HCT116 (cell line): ENCODE measurements at regions of chr6 and their contacts with region 1.

Region 1: GRCh38 chr6:151669196-151669688 is 138.2 kb upstream of the ESR1 start:
- DNase-seq: no peak
- ATAC-seq: no peak
- H3K4me3 ChIP-seq: peak overlapping the region; percentile 19 to 53; a peak in 3 of 4 replicates
- H3K27ac ChIP-seq: peak overlapping the region; percentile 56
- H3K4me1 ChIP-seq: peaks cover 17 to 40% of the 10 kb centered on the region in 2 experiments
- H3K27me3 ChIP-seq: no peaks in the 10 kb centered on the region
- CTCF ChIP-seq: no peak
- POLR2A ChIP-seq: no peak
- RAD21 ChIP-seq: no peak

Region 2: DNA sequence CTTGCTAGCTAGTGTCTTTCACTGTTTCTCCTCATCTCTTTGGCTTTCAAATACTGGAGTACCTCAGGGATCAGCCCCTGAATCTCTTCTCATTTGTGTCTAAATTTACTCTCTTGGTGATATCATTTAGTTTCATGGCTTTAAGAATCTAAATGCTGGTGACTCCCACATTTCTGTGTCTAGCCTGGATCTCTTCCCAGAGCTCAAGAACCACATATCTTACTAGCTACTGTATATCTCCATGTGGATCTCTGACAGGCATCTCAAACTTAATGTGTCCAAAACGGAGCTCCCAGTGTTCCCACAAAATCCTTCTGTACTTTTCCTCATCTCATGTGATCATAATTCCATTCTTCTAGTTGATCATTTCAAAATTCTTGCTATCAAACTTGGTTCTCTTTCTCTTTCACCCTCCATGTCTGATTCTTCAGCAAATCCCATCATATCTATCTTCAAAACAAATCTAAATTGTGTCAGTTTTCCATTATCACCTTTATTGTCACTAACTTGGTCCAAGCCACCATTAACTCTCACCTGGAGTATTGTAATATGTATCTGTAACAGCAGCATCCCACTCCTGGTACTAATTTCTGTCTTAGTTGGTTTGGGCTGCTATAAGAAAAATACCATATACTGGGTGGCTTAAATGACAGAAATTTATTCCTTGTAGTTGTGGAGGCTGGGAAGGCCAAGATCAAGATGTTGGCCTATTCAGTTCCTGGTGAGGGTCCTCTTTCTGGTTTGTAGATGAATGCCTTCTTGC is 129.6 kb before region 1 on chr6:
- CTCF ChIA-PET with region 1: no interaction called
- POLR2A ChIA-PET with region 1: no interaction called
- RAD21 ChIA-PET with region 1: interaction called in 1 of 2 experiments, 10 read pairs
- intact Hi-C with region 1: no loop called
- DNase-seq: no peak
- ATAC-seq: no peak
- H3K4me3 ChIP-seq: no peak overlapping the region
- H3K27ac ChIP-seq: no peak overlapping the region
- H3K4me1 ChIP-seq: no peaks in the 10 kb centered on the region
- H3K27me3 ChIP-seq: no peaks in the 10 kb centered on the region
- CTCF ChIP-seq: no peak
- POLR2A ChIP-seq: no peak
- RAD21 ChIP-seq: no peak

Region 3: GRCh38 chr6:152117156-152118133 is 448.2 kb after region 1 on chr6:
- CTCF ChIA-PET with region 1: no interaction called
- POLR2A ChIA-PET with region 1: no interaction called
- RAD21 ChIA-PET with region 1: no interaction called
- intact Hi-C with region 1: loop called (anchors 2 kb)
- DNase-seq: no peak
- ATAC-seq: no peak
- H3K4me3 ChIP-seq: no peak overlapping the region
- H3K27ac ChIP-seq: no peak overlapping the region
- H3K4me1 ChIP-seq: no peaks in the 10 kb centered on the region
- H3K27me3 ChIP-seq: no peaks in the 10 kb centered on the region
- CTCF ChIP-seq: no peak
- POLR2A ChIP-seq: no peak
- RAD21 ChIP-seq: no peak